ENCODE measurements at regions of chr20 and their contacts with region 1.

Region 1: DNA sequence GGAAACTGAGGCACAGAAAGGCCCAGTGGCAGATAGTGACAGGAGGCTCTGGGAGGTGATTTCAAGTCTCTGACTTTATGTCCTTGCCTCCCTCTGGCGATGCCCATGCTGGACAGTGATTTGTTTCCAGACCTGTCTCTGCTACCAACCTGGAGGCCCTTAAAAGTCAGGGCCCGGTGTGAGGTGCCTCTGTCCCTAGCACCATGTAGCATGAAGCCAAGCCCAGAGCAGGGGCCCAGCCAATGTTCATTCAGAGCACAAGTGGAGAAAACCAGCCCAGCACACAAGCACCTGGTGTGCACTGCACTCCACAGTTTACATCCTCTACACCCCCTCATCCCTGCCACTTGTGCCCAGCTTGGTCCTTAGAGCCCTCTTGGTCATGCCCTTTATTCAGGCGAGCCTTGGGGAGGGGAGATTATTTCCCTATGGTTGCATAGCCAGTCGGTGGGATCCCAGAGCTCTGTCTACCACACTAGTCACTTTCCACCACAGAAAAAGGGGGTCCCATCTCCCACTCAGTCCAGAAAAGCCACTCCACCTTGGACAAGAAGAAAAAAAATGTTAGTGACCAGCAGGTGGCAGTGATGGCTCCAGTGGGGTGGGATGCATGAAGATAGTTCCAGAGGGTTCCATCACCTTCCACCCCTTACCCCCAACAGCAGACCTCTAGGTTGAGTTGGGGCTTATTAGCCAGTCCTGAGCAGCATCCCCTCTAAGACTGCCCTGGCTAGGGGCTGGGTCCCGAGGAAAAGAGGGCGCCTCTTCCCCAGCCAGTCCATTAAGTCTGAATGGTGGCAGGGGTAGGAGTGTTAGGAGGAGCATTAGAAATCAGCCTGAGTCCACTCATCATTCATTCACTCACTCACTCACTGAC is 30.9 kb downstream of the KIAA1755 start:
- DNase-seq: peak in 1 of 7 donors; percentile 22
- H3K4me3 ChIP-seq: no peak overlapping the region
- H3K27ac ChIP-seq: no peak overlapping the region
- H3K4me1 ChIP-seq: peaks cover 0 to 3% of the 10 kb centered on the region in 2 donors
- H3K27me3 ChIP-seq: no peaks in the 10 kb centered on the region
- CTCF ChIP-seq: peak; percentile 26 to 53 (median 44)
- POLR2A ChIP-seq: no peak

Region 2: DNA sequence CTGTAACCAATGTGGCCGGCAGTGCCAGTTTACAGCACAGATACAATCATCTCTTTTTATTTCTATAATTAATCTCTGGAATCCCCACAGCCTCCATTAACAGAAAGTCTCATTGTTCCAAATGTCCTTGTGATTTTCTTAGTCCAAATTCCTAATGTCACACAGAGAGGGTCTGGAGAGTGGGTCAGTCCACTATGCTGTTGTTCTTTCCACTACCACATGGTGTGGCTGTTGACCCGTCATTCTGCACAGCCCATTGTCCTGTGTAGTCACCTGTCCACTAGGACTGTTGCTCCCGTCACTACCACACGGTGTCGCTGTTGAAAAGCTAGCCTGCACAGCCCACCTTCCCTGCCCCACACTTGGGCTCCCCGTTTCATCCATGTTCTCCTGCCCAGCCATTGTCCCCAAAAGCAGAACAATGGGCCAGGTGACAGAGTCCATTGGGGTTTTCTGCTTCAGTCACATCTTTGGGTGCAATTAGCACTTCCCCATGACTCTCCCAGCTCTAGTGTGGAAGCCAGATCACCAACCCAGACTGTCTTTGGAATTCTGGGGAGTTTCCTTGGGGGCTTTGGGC is 108.0 kb after region 1 on chr20:
- intact Hi-C with region 1: no loop called
- DNase-seq: no peak
- H3K4me3 ChIP-seq: no peak overlapping the region
- H3K27ac ChIP-seq: no peak overlapping the region
- H3K4me1 ChIP-seq: no peaks in the 10 kb centered on the region
- H3K27me3 ChIP-seq: no peaks in the 10 kb centered on the region
- CTCF ChIP-seq: peak in 4 of 6 experiments; percentile 8 to 50 (median 35)
- POLR2A ChIP-seq: no peak

Region 3: DNA sequence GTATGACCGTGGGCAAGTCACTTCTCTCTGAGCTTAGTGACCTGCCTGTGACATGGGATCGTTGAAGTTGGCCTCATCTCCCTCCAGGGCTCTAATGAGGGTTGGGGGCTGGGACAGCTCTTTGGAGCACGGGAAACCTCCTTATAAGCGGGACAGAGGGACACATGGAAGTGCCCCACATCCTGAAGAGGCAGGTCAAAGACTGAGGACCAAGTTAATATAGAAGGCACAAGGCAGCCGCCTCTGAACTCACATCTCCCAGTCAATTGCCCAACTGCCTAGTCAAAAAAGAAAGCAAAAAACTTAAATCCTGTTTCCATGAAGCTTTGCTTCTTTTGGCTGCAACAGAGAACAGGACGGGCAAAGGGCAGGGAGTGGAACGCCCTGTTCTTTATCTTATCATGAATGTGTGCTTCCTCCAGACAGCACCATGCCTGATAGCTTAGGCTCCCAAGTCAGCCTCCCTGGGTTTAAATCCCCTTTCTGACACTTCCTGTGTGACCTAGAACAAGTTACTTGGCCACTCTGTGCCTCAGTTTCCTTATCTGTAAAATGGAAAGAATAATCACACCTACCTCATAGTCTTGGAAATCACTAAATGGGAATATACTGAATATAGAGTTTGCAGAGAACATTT is 143.7 kb after region 1 on chr20:
- intact Hi-C with region 1: no loop called
- DNase-seq: peak in 4 of 7 donors; percentile 29 to 73 (median 38)
- H3K4me3 ChIP-seq: no peak overlapping the region
- H3K27ac ChIP-seq: peak overlapping the region in 3 of 5 donors; percentile 57 to 90 (median 71)
- H3K4me1 ChIP-seq: no peaks in the 10 kb centered on the region
- H3K27me3 ChIP-seq: no peaks in the 10 kb centered on the region
- CTCF ChIP-seq: no peak
- POLR2A ChIP-seq: no peak

Region 4: DNA sequence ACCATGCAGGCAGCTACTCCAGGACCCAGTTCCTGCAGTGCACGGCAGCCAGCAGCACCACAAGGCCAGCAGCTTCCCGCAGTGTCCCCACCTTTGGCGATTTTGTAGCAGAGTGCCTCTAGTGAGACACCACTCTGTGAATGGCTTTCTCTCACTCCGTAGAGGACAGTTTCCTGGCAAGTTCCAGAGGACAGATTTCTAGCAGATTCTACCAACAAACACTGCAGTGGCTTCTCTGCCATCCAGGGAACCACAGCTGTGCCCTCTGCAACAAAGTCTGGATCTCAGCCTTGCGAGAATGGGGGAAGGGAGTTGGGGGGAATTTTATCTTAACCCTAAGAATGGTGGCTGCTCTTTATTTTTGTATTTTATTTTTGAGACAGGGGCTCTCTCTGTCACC is 176.9 kb after region 1 on chr20:
- intact Hi-C with region 1: loop called in 1 of 2 experiments (anchors 10 kb)
- DNase-seq: peak in 1 of 7 donors; percentile 27
- H3K4me3 ChIP-seq: no peak overlapping the region
- H3K27ac ChIP-seq: no peak overlapping the region
- H3K4me1 ChIP-seq: no peaks in the 10 kb centered on the region
- H3K27me3 ChIP-seq: no peaks in the 10 kb centered on the region
- CTCF ChIP-seq: no peak
- POLR2A ChIP-seq: no peak

Measured in adrenal gland (tissue), 19 donors.